Dendritic cell treated with granulocyte-macrophage colony-stimulating factor and Interleukin-4, amounts not matched to agents 40 ng/mL and 50 ng/mL, for 4 days (primary cell): ENCODE measurements at regions of chr19 and their contacts with region 1.

Region 1: GRCh38 chr19:18281082-18282020 is at the start of gene JUND:
- H3K4me3 Mint-ChIP-seq: peak within 1 kb of the TSS; percentile 91
- H3K27ac Mint-ChIP-seq: peak within 1 kb of the TSS; percentile 99
- H3K4me1 Mint-ChIP-seq: peaks cover 57% of the 10 kb centered on the region
- H3K27me3 Mint-ChIP-seq: no peaks in the 10 kb centered on the region

Region 2: DNA sequence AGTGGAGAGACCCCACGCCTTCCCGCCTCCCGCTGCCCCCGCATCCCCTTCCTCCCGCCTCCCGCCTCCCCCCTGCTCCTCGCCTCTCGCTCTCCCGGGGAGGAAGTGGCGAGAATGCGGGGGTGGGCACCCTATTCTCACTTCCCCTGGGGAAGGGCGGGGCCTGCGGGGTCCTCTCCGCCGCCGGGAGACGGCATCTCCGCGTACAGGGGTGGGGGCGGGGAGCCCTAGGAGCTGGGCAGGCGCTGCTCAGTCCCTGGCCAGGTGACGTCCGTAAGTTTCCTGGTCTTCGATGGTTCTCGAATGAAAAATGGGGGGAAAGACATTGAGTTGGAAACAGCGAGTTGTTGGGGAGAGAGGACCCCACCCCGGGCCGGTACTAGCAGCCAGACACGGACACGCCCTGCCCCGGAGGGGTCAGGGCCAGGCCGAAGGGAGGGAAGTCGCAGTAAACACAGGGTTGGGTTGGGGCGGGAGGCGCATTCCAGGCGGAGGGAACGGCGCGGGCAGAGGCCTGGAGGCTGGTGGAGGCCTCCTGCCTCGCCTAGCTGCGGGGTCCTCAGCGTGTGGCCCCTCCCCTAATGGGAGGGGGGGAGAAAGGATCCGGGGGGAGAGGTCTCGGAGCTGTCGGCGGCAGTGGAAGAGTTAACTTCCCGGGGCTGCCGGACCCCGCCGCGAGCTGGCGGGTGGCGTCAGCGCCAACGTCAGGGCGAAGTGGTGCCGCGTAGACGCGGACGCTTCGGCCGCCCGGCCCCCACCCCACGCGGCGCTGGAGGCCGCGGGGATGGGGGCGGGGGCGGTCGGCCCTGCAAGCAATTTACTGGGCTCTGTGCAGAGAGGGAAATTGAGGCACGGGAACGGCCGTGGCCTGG is 10.5 kb after region 1 on chr19:
- intact Hi-C with region 1: loop called (anchors 1 kb)
- H3K4me3 Mint-ChIP-seq: peak overlapping the region; percentile 73
- H3K27ac Mint-ChIP-seq: peak overlapping the region; percentile 97
- H3K4me1 Mint-ChIP-seq: peaks cover 64% of the 10 kb centered on the region
- H3K27me3 Mint-ChIP-seq: peaks cover 2% of the 10 kb centered on the region

Region 3: DNA sequence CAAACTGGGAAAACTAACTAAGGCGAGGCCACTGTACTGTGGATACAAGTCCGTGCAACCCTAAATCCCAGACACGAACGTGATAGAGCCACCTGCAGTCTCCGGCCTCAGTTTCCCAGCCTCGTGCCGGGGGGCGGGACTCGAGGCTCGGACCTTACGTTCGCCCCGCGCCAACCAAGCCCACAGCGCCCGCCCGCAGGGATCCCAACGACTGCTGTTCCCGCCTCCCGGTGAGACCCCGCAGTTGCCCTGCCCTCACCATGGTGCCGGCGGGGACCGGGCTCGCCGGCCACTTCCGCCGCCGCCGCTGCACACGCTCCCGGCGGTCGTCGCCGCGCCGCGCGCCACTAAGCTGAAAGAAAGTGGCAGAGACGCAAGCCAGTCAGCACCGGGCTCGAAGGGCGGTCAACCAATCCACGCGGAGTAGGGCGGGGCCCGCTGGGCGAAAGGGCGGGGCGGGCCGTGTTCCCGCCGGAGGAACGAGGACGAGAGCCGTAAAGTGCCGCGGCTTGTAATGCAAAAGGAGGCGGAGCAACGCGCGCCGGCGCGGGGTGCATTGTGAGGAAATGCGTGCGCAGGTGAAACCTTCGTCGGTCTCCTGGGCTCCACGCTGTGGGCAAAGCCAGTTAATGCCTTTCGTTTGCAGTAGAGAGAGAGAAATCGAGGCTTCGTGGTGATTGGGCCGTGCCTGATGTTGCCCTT is 41.6 kb after region 1 on chr19 and contains the start of gene LSM4:
- intact Hi-C with region 1: loop called (anchors 1 kb)
- H3K4me3 Mint-ChIP-seq: peak within 1 kb of the TSS; percentile 86
- H3K27ac Mint-ChIP-seq: peak within 1 kb of the TSS; percentile 96
- H3K4me1 Mint-ChIP-seq: peaks cover 60% of the 10 kb centered on the region
- H3K27me3 Mint-ChIP-seq: no peaks in the 10 kb centered on the region

Region 4: DNA sequence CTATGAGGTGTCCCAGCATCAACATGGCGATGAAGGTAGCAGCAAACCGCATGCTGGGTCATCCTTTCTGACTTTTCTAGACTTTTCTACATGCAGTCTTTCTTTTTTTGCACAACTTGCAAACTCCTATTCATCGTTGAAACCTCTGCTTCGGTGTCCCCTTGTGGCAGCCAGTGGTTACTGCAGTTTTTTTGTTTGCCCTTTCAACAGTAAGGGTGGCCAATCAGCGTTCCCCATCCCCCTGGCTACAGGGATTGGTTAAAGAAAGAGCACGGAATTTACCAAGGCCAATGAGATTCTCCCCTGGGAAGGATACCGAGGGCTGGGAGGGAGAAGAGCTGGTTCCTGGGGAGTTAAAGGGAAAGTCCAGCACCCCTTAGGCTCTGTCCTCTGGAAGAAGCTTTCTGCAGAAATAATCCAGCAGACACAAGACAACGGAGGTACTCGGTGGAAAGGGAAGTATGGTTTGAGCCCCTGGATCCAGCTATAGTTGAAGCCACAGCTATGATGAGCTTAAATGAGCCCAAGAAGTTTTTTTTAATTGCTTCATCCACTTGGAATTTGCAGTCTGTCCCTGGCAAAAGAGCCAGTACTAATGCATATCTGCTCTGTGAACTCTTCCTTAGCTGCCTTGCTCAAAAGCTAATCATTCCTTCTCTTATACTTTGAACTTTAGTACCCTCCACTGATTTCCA is 47.1 kb after region 1 on chr19:
- intact Hi-C with region 1: loop called (anchors 1 kb)
- H3K4me3 Mint-ChIP-seq: peak overlapping the region; percentile 66
- H3K27ac Mint-ChIP-seq: peak overlapping the region; percentile 76
- H3K4me1 Mint-ChIP-seq: peaks cover 22% of the 10 kb centered on the region
- H3K27me3 Mint-ChIP-seq: no peaks in the 10 kb centered on the region

Region 5: GRCh38 chr19:18419195-18419698 is 137.9 kb after region 1 on chr19 and contains the start of gene SSBP4:
- intact Hi-C with region 1: loop called (anchors 5 kb)
- H3K4me3 Mint-ChIP-seq: peak within 1 kb of the TSS; percentile 83
- H3K27ac Mint-ChIP-seq: peak within 1 kb of the TSS; percentile 95
- H3K4me1 Mint-ChIP-seq: peaks cover 88% of the 10 kb centered on the region
- H3K27me3 Mint-ChIP-seq: no peaks in the 10 kb centered on the region